ENCODE measurements at regions of chr16 and their contacts with region 1.

Region 1: DNA sequence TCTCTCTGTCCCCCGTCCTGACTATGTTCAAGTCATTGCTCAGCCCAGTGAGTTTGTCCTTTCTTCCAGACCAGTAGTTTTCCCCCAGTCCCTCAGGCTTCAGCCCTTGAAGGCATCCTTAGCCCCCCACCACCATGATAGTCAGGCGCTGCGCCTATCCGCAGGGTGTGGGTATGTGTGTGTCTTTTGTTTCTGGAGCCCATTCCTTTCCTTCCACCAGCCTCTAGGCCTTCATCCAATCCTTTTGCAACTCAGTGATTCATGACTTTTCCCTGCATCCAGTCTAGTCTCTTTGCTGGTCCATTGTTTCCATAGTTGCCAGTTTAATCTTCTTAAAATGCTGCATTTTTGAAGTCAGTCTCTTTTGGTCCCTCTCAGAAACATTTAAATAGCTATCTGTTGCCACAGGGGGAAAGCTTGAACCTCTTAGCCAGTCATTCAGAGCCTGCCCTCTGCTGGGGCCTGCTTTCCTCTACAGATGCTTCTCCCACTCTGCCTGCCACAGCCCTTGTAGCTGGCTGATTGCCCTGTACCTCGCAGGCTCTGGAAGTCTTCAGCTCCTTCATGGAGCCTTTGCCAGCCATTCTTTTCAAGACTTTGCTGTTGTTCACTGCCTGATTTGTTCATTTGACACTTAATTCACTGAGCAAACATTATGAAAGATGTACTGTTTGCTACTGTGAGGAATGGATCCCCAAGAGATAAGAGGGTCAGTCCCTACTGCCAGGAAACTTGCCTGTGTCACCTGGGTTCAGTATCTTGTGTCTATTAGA is 55.9 kb upstream of the ADCY7 start:
- DNase-seq: peak; percentile 84
- ATAC-seq: peak; percentile 97
- H3K4me3 Mint-ChIP-seq: no peak overlapping the region
- H3K27ac Mint-ChIP-seq: peak overlapping the region; percentile 58
- H3K4me1 Mint-ChIP-seq: peaks cover 27% of the 10 kb centered on the region
- H3K27me3 Mint-ChIP-seq: no peaks in the 10 kb centered on the region
- CTCF ChIP-seq: peak; percentile 70

Region 2: GRCh38 chr16:50011707-50012106 is 198.7 kb before region 1 on chr16:
- CTCF ChIA-PET with region 1: no interaction called
- POLR2A ChIA-PET with region 1: no interaction called
- intact Hi-C with region 1: no loop called
- DNase-seq: no peak
- ATAC-seq: no peak
- H3K4me3 Mint-ChIP-seq: no peak overlapping the region
- H3K27ac Mint-ChIP-seq: no peak overlapping the region
- H3K4me1 Mint-ChIP-seq: no peaks in the 10 kb centered on the region
- H3K27me3 Mint-ChIP-seq: no peaks in the 10 kb centered on the region
- CTCF ChIP-seq: no peak

Region 3: GRCh38 chr16:50065624-50066481 is 144.6 kb before region 1 on chr16 and contains the start of gene HEATR3:
- CTCF ChIA-PET with region 1: interaction called, 34 read pairs
- POLR2A ChIA-PET with region 1: interaction called, 4 read pairs
- intact Hi-C with region 1: no loop called
- DNase-seq: peak; percentile 95
- ATAC-seq: peak; percentile 84
- H3K4me3 Mint-ChIP-seq: peak within 1 kb of the TSS; percentile 84
- H3K27ac Mint-ChIP-seq: peak within 1 kb of the TSS; percentile 91
- H3K4me1 Mint-ChIP-seq: peaks cover 32% of the 10 kb centered on the region
- H3K27me3 Mint-ChIP-seq: no peaks in the 10 kb centered on the region
- CTCF ChIP-seq: no peak
- total RNA-seq, gene HEATR3: 23.6 to 29.6 TPM

Region 4: DNA sequence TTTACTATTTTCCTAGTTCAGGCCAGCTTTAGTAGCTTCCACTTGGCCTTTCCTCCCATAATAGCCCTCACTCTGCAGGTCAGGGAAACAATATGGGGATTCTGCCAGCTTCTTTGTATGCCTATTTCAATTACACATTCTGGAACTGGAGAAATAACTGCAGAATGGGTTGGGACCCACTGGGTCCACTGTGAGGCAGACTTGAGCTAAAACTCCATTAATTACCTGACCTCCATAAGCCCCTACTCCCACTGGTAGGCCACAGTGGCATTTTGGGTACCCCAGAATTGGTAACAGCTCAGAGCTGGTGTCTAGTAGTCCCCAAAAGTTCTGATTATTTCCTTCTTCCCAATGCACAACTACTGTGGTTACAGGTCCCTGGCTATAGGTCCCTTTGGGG is 74.1 kb before region 1 on chr16:
- CTCF ChIA-PET with region 1: interaction called, 28 read pairs
- POLR2A ChIA-PET with region 1: no interaction called
- intact Hi-C with region 1: no loop called
- DNase-seq: no peak
- ATAC-seq: no peak
- H3K4me3 Mint-ChIP-seq: no peak overlapping the region
- H3K27ac Mint-ChIP-seq: no peak overlapping the region
- H3K4me1 Mint-ChIP-seq: no peaks in the 10 kb centered on the region
- H3K27me3 Mint-ChIP-seq: no peaks in the 10 kb centered on the region
- CTCF ChIP-seq: no peak

Region 5: GRCh38 chr16:50152807-50153452 is 57.5 kb before region 1 on chr16 and contains the start of gene TENT4B:
- CTCF ChIA-PET with region 1: interaction called, 10 read pairs
- POLR2A ChIA-PET with region 1: no interaction called
- intact Hi-C with region 1: loop called (anchors 10 kb)
- DNase-seq: peak; percentile 86
- ATAC-seq: peak; percentile 79
- H3K4me3 Mint-ChIP-seq: peak within 1 kb of the TSS; percentile 83
- H3K27ac Mint-ChIP-seq: peak within 1 kb of the TSS; percentile 98
- H3K4me1 Mint-ChIP-seq: peaks cover 32% of the 10 kb centered on the region
- H3K27me3 Mint-ChIP-seq: no peaks in the 10 kb centered on the region
- CTCF ChIP-seq: no peak
- total RNA-seq, gene TENT4B: 19.0 to 19.2 TPM

Region 6: GRCh38 chr16:50166511-50167500 is 43.6 kb before region 1 on chr16:
- CTCF ChIA-PET with region 1: interaction called, 16 read pairs
- POLR2A ChIA-PET with region 1: no interaction called
- intact Hi-C with region 1: no loop called
- DNase-seq: peak; percentile 56
- ATAC-seq: peak; percentile 82
- H3K4me3 Mint-ChIP-seq: peak overlapping the region; percentile 62
- H3K27ac Mint-ChIP-seq: peak overlapping the region; percentile 78
- H3K4me1 Mint-ChIP-seq: peaks cover 55% of the 10 kb centered on the region
- H3K27me3 Mint-ChIP-seq: no peaks in the 10 kb centered on the region
- CTCF ChIP-seq: no peak

Region 7: GRCh38 chr16:50281964-50282538 is 71.6 kb after region 1 on chr16:
- CTCF ChIA-PET with region 1: interaction called, 18 read pairs
- POLR2A ChIA-PET with region 1: interaction called, 5 read pairs
- intact Hi-C with region 1: loop called (anchors 10 kb)
- DNase-seq: peak; percentile 82
- ATAC-seq: peak; percentile 70
- H3K4me3 Mint-ChIP-seq: peak overlapping the region; percentile 29
- H3K27ac Mint-ChIP-seq: peak overlapping the region; percentile 70
- H3K4me1 Mint-ChIP-seq: peaks cover 87% of the 10 kb centered on the region
- H3K27me3 Mint-ChIP-seq: no peaks in the 10 kb centered on the region
- CTCF ChIP-seq: no peak

Region 8: DNA sequence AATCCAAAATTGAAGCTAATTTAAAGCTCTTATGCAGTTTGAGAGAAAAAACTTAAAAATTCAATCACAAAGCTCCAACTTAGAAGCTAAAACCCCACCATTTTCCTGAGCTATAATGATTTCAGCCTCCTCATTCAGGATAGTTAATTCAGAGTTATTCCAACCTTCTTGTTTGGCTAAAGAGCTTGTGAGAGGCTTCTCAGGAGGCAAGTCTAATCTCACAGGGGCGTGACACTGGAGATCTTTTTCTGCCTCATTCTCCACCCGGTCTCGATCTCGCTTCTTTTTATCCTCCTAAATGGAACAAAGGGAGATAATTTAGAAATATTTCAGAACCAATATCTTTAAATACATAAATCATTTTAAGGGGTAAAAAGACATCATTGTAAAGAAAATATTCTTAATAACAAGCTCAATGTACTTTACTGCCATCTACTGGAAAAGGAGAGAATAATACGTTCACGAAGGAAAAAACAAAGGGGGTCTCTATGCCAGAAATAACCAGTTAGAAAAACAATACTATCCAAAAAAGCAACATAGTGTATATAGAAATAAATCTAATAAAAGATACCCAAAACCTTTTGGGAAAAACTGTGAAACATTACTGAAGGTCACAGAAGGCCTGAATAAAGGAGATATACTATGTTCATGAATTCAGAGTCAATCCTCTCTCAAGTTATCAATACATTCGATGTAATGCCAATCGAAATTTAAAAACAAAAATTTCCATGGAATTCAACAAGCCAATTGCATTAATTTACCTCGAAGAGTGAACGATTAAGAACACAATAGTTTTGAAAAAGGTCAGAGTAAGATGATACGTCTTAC is 144.4 kb after region 1 on chr16:
- CTCF ChIA-PET with region 1: interaction called, 76 read pairs
- POLR2A ChIA-PET with region 1: no interaction called
- intact Hi-C with region 1: loop called (anchors 10 kb)
- DNase-seq: no peak
- ATAC-seq: no peak
- H3K4me3 Mint-ChIP-seq: no peak overlapping the region
- H3K27ac Mint-ChIP-seq: peak overlapping the region; percentile 13
- H3K4me1 Mint-ChIP-seq: peaks cover 23% of the 10 kb centered on the region
- H3K27me3 Mint-ChIP-seq: no peaks in the 10 kb centered on the region
- CTCF ChIP-seq: peak; percentile 92